Right cardiac atrium (tissue), 5 donors: ENCODE measurements at regions of chr1 and their contacts with region 1.

Region 1: GRCh38 chr1:44835738-44836675 is 7.0 kb downstream of the PTCH2 start:
- DNase-seq: peak; percentile 89 to 95 (median 94)
- ATAC-seq: peak; percentile 84 to 91
- H3K4me3 ChIP-seq: no peak overlapping the region
- H3K27ac ChIP-seq: no peak overlapping the region
- H3K4me1 ChIP-seq: no peaks in the 10 kb centered on the region
- H3K27me3 ChIP-seq: no peaks in the 10 kb centered on the region

Region 2: GRCh38 chr1:44786138-44786840 is 49.7 kb before region 1 on chr1:
- intact Hi-C with region 1: loop called in 2 of 4 experiments (anchors 5 to 10 kb)
- DNase-seq: peak; percentile 68 to 89 (median 84)
- ATAC-seq: peak; percentile 70 to 77
- H3K4me3 ChIP-seq: peak overlapping the region; percentile 2
- H3K27ac ChIP-seq: no peak overlapping the region
- H3K4me1 ChIP-seq: peaks cover 2% of the 10 kb centered on the region
- H3K27me3 ChIP-seq: no peaks in the 10 kb centered on the region

Region 3: DNA sequence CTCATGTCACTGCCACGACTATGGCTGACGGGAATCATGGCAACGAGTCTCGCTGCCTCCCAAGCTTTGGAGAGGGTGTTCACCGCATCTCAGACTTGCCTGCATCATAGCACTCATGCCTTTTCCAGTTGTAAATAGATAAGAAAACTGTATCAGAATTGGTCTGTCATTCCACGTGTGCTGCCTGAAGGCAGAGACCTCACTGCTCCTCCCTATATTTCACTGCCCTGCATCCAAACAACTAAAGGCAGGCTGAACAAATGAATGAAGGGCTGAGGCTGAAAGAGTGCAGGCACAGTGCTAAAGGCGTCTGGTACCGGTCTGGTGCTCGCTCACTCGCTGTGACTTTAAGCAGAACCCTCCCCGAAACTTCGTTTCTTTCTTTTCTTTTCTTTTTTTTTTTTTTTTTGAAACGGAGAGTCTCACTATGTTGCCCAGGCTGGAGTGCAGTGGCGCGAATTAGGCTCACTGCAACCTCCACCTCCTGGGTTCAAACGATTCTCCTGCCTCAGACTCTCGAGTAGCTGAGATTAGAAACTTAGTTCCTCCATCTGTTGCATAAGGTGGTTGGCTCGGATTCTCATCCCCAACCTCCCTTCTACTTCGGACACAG is 149.8 kb after region 1 on chr1:
- intact Hi-C with region 1: loop called in 1 of 4 experiments (anchors 10 kb)
- DNase-seq: no peak
- ATAC-seq: peak in 1 of 2 donors; percentile 2
- H3K4me3 ChIP-seq: peak overlapping the region; percentile 66
- H3K27ac ChIP-seq: peak overlapping the region; percentile 15
- H3K4me1 ChIP-seq: peaks cover 4% of the 10 kb centered on the region
- H3K27me3 ChIP-seq: no peaks in the 10 kb centered on the region

Region 4: GRCh38 chr1:45011837-45012638 is 176.0 kb after region 1 on chr1 and contains the start of gene UROD:
- intact Hi-C with region 1: loop called in 1 of 4 experiments (anchors 10 kb)
- DNase-seq: peak; percentile 93 to 97 (median 95)
- ATAC-seq: peak; percentile 93
- H3K4me3 ChIP-seq: peak within 1 kb of the TSS; percentile 78
- H3K27ac ChIP-seq: peak within 1 kb of the TSS; percentile 91
- H3K4me1 ChIP-seq: peaks cover 9% of the 10 kb centered on the region
- H3K27me3 ChIP-seq: no peaks in the 10 kb centered on the region
- total RNA-seq, gene UROD: 71.9 to 87.6 (median 80.0) TPM

Region 5: DNA sequence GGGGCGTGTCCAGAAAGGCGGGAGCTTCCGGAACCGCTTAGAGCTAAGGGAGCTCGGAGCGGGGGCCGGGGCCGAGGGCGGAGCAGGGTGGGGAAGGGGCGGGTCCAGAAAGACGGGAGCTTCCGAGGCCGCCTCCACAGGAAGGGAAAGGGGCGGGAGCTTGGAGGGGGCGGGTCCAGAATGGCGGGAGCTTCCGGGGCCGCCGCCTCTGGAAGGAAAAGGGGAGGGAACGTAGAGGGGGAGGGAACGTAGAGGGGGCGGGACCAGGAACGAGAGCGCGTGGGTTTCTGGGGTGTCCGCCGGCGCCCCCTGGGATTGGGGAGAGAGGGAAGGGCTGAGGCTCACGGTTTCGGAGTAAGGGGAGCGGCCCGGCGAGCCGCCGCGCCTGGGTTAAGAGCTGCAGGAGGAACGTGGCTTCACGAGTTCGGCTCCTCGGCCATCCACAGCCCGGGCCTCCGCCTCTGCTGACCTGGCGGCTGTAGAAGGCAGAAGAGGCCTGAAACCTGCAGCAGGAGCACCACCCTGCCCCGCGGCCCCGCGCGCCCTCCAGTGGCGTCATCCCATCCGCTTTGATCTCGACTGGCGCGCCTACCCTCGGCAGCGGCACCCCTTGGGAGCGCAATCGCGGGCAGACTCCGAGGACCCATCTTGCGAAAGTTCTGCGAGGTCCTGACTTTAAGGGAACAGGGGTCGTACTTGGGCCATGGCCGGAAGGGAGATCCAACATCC is 467.7 kb after region 1 on chr1:
- intact Hi-C with region 1: loop called in 1 of 4 experiments (anchors 10 kb)
- DNase-seq: peak; percentile 99 to 100 (median 99)
- ATAC-seq: peak; percentile 98 to 99
- H3K4me3 ChIP-seq: peak overlapping the region; percentile 76
- H3K27ac ChIP-seq: peak overlapping the region; percentile 91
- H3K4me1 ChIP-seq: peaks cover 3% of the 10 kb centered on the region
- H3K27me3 ChIP-seq: no peaks in the 10 kb centered on the region